ENCODE measurements at regions of chr5 and their contacts with region 1.

Region 1: GRCh38 chr5:98641671-98642070 is 131.8 kb upstream of the RGMB start:
- DNase-seq: no peak
- H3K4me3 Mint-ChIP-seq: no peak overlapping the region
- H3K27ac Mint-ChIP-seq: no peak overlapping the region
- H3K4me1 Mint-ChIP-seq: no peaks in the 10 kb centered on the region
- H3K27me3 Mint-ChIP-seq: no peaks in the 10 kb centered on the region
- CTCF ChIP-seq: no peak

Region 2: DNA sequence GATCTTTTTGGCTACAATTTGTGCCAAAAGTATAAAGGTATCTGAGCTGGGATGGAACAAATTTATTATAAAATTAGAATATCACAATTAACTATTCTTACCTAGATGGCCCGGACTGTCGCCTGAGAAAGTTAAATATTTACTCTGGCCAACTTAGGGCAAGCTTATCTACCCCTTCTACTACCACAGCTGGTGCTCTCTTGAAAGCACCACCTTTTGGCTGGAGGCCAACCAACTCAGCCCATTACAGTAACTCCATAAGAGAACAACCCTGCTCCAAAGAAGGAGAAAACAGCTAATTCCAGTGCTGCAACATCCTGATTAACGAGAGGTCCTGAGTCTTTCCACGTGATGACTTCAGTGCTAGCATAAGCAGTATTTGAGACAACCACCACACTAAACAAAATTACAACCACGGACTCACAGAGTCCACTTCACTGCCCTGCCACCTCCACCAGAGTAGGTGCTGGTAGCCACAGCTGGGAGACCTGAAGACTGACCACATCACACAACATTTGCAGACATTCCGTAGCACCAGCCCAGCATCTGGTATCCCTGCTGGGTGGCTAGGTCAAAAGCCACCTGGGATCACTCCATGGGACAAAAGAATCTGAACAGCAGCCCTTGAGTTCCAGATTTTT is 175.0 kb after region 1 on chr5:
- CTCF ChIA-PET with region 1: no interaction called
- intact Hi-C with region 1: loop called (anchors 10 kb)
- DNase-seq: peak; percentile 73
- H3K4me3 Mint-ChIP-seq: no peak overlapping the region
- H3K27ac Mint-ChIP-seq: no peak overlapping the region
- H3K4me1 Mint-ChIP-seq: peaks cover 14% of the 10 kb centered on the region
- H3K27me3 Mint-ChIP-seq: no peaks in the 10 kb centered on the region
- CTCF ChIP-seq: no peak

Region 3: GRCh38 chr5:99191206-99191745 is 549.6 kb after region 1 on chr5:
- CTCF ChIA-PET with region 1: no interaction called
- intact Hi-C with region 1: no loop called
- DNase-seq: no peak
- H3K4me3 Mint-ChIP-seq: no peak overlapping the region
- H3K27ac Mint-ChIP-seq: no peak overlapping the region
- H3K4me1 Mint-ChIP-seq: peaks cover 9% of the 10 kb centered on the region
- H3K27me3 Mint-ChIP-seq: no peaks in the 10 kb centered on the region
- CTCF ChIP-seq: no peak

Measured in Calu3 (cell line).